ENCODE measurements at regions of chr1 and their contacts with region 1.

Region 1: GRCh38 chr1:224503161-224504118 is 68.8 kb upstream of the WDR26 start:
- DNase-seq: peak; percentile 93
- H3K4me3 ChIP-seq: peak overlapping the region in 3 of 4 donors; percentile 1 to 12 (median 12)
- H3K27ac ChIP-seq: peak overlapping the region; percentile 79 to 89 (median 85)
- H3K4me1 ChIP-seq: peaks cover 0 to 50% (median 41%) of the 10 kb centered on the region in 4 donors
- H3K27me3 ChIP-seq: no peaks in the 10 kb centered on the region
- CTCF ChIP-seq: peak in 1 of 4 experiments; percentile 23
- EP300 ChIP-seq: peak in 2 of 4 donors; percentile 12 to 52
- POLR2A ChIP-seq: no peak

Region 2: GRCh38 chr1:224411766-224412165 is 91.7 kb before region 1 on chr1:
- intact Hi-C with region 1: no loop called
- DNase-seq: no peak
- H3K4me3 ChIP-seq: no peak overlapping the region
- H3K27ac ChIP-seq: no peak overlapping the region
- H3K4me1 ChIP-seq: peaks cover 0 to 9% (median under 1%) of the 10 kb centered on the region in 4 donors
- H3K27me3 ChIP-seq: no peaks in the 10 kb centered on the region
- CTCF ChIP-seq: no peak
- EP300 ChIP-seq: no peak
- POLR2A ChIP-seq: no peak

Region 3: GRCh38 chr1:224434691-224435317 is 68.6 kb before region 1 on chr1 and contains the start of gene WDR26:
- intact Hi-C with region 1: loop called (anchors 2 kb)
- DNase-seq: peak; percentile 90
- H3K4me3 ChIP-seq: peak within 1 kb of the TSS; percentile 76 to 92 (median 90)
- H3K27ac ChIP-seq: peak within 1 kb of the TSS; percentile 89 to 99 (median 98)
- H3K4me1 ChIP-seq: peaks cover 0 to 47% (median 39%) of the 10 kb centered on the region in 4 donors
- H3K27me3 ChIP-seq: no peaks in the 10 kb centered on the region
- CTCF ChIP-seq: no peak
- EP300 ChIP-seq: no peak
- POLR2A ChIP-seq: peak; percentile 24 to 50
- total RNA-seq, gene WDR26: 63.3 to 105 (median 66.6) TPM